OCI-LY7 (cell line): ENCODE measurements at regions of chr13 and their contacts with region 1.

Region 1: GRCh38 chr13:60112771-60113170 is 51.0 kb downstream of the DIAPH3 start:
- DNase-seq: no peak
- H3K4me3 ChIP-seq: no peak overlapping the region
- H3K27ac ChIP-seq: no peak overlapping the region
- H3K4me1 ChIP-seq: no peaks in the 10 kb centered on the region
- CTCF ChIP-seq: no peak

Region 2: GRCh38 chr13:60099631-60100420 is 12.9 kb before region 1 on chr13:
- CTCF ChIA-PET with region 1: no interaction called
- POLR2A ChIA-PET with region 1: interaction called, 11 read pairs
- intact Hi-C with region 1: no loop called
- DNase-seq: no peak
- H3K4me3 ChIP-seq: no peak overlapping the region
- H3K27ac ChIP-seq: no peak overlapping the region
- H3K4me1 ChIP-seq: no peaks in the 10 kb centered on the region
- CTCF ChIP-seq: no peak

Region 3: DNA sequence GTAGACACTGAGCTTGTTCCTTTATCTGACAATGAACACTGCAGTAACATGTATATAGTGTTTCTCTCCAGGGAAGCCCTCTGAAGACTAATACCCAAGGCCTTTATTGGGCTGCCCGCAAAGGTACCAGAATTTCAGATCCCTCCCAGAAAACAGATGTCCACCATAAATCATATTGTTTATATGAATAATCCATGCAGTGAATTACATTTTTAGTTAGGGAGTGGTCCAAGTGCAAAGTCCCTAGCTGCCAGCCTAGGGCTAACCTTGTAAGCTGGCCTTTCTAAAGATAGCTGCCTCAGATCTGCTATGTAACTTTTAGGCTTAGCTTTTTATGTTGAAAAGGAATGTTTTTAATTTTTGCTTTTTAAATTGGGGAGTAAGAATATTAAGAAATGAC is 329.0 kb after region 1 on chr13:
- CTCF ChIA-PET with region 1: no interaction called
- POLR2A ChIA-PET with region 1: no interaction called
- intact Hi-C with region 1: no loop called
- DNase-seq: no peak
- H3K4me3 ChIP-seq: no peak overlapping the region
- H3K27ac ChIP-seq: no peak overlapping the region
- H3K4me1 ChIP-seq: no peaks in the 10 kb centered on the region
- CTCF ChIP-seq: no peak